BJ (cell line): ENCODE measurements at regions of chr4 and their contacts with region 1.

Region 1: GRCh38 chr4:15882675-15883086 is 55.9 kb downstream of the FGFBP1 start:
- DNase-seq: peak; percentile 16
- H3K4me3 ChIP-seq: no peak overlapping the region
- H3K27me3 ChIP-seq: peaks cover 4% of the 10 kb centered on the region; the same call in 1 of the 2 replicates
- CTCF ChIP-seq: peak; percentile 90

Region 2: DNA sequence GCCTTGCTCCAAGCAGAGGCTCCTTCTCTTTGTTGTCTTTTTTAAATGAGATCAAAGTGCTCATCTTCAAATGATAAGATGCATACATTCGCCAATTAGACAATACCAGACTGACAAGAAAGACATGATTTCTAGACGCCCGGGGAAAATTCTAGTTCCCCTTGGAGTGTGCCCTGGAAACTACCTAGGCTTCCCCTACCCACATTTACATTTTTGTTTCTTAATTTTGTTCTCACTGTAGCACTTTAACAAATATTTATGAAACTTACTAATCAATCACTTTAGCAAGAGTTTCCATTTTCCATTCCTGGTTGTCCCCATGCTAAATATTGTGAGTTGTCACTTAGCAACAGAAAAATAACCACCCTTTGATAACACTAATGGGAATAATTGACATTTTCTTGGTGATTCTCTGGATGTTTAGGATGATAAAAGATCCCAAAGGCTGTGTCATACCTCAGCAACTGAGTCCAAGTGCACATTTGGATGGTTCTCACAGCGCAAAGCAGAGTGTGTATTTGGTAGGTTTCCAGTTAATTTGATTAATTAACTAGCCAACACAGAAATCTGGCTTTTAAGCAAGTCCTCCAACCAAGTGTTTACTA is 13.8 kb before region 1 on chr4:
- CTCF ChIA-PET with region 1: interaction called, 22 read pairs
- POLR2A ChIA-PET with region 1: no interaction called
- DNase-seq: no peak
- H3K4me3 ChIP-seq: no peak overlapping the region
- H3K27me3 ChIP-seq: peaks cover 2% of the 10 kb centered on the region; the same call in 1 of the 2 replicates
- CTCF ChIP-seq: no peak

Region 3: GRCh38 chr4:15912236-15912635 is 29.6 kb after region 1 on chr4:
- CTCF ChIA-PET with region 1: interaction called, 16 read pairs
- POLR2A ChIA-PET with region 1: no interaction called
- DNase-seq: no peak
- H3K4me3 ChIP-seq: no peak overlapping the region
- H3K27me3 ChIP-seq: no peaks in the 10 kb centered on the region; the same call in 1 of the 2 replicates
- CTCF ChIP-seq: no peak

Region 4: DNA sequence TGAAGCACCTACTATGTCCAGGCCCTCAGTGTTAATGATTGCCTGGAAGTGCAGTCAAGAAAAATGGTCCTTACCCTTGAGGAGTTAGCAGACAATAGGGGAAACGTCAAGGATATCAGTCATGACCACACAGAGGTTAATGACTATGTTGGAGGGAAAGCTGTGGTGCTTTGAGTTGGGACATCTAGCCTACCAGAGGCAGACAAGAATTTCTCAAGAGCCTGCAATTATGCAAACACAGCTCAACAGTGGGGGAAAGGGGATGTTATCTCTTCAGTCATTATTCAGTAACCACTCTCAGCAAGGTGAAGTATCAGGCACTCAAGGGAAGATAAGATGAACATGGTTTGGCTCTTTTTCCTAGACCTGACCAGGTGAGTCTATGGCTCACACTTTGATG is 62.8 kb after region 1 on chr4:
- CTCF ChIA-PET with region 1: interaction called, 11 read pairs
- POLR2A ChIA-PET with region 1: no interaction called
- DNase-seq: no peak
- H3K4me3 ChIP-seq: no peak overlapping the region
- H3K27me3 ChIP-seq: peaks cover 6% of the 10 kb centered on the region
- CTCF ChIP-seq: no peak

Region 5: DNA sequence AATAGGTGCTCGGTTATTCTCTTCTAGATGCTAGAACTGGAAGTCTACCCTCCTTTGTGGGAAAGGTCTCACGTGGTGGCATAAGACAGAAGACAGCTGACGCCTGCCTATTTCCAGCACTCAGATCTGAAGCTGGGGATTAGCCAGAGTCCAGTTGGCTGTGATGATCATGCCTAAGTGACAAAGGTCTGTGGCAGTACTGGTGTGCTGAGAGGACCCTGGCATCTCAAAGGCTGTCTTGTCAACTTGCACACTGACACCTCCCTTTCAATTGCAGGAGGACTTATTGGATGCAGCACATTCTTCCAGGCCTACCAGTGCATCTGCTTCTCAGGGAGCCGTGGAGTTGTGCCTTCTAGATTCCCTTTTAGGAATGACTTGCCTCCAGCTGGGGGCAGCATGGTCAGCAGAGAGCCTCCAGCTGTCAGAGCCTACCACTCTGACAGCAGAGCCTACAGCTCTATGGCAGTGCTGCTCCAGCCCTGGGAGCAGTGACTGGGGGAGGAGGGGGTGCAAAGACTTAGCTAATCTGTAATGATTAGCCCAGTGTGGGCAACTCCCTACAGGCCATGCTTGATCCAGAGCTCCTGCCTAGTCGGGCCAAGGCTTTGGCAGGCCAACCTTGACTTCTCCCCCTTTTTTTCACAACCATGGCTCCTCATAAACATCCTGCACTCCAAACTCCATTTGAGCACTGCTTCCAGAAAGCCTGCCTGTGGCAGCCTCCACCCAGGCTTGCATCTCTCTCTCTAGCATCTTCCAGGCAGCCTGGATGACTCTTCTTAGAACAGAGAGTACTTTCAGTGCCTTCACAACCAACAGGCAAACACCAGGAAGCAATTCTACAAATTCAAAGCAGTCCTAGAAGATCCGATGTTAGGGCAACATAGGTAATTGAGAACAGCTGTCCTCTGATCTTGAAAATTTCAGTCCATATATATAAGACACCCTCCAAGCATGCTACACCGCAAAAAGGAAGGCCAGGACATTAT is 94.1 kb after region 1 on chr4:
- CTCF ChIA-PET with region 1: interaction called, 11 read pairs
- POLR2A ChIA-PET with region 1: no interaction called
- DNase-seq: no peak
- H3K4me3 ChIP-seq: no peak overlapping the region
- H3K27me3 ChIP-seq: peaks cover 3% of the 10 kb centered on the region
- CTCF ChIP-seq: no peak

Region 6: DNA sequence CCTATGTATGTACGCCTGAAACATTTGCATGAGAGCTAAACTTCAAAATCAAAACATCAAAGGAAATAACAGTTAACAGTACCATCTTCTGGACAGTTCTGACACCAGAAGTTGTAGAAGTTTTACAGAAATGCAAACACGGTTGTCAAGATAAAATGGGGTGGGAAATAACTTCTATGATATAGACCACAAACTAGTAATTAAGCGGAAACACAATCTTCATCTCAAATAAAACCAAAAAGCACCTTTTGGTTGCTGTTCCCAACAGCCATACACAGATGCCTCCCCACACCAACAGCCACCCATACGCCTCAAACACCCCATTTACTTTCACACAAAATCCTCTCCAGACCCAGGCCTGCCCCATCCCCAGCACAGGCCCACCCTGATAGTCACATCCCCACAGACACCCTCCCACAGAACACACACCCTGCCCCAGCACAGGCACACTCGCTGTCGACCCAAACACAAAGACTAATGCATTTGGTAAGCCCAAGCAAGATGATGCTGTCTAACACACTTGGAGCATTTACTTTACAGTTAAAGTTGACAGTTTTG is 279.2 kb after region 1 on chr4:
- CTCF ChIA-PET with region 1: no interaction called
- POLR2A ChIA-PET with region 1: no interaction called
- DNase-seq: no peak
- H3K4me3 ChIP-seq: no peak overlapping the region
- H3K27me3 ChIP-seq: no peaks in the 10 kb centered on the region
- CTCF ChIP-seq: no peak